Heart right ventricle (tissue), 16 donors: ENCODE measurements at regions of chr7 and their contacts with region 1.

Region 1: GRCh38 chr7:74401137-74401859 is 52.4 kb upstream of the GTF2IRD1 start:
- DNase-seq: peak; percentile 65
- ATAC-seq: peak; percentile 36 to 81 (median 62)
- H3K4me3 ChIP-seq: no peak overlapping the region
- H3K27ac ChIP-seq: no peak overlapping the region
- H3K4me1 ChIP-seq: no peaks in the 10 kb centered on the region
- H3K27me3 ChIP-seq: no peaks in the 10 kb centered on the region
- CTCF ChIP-seq: peak; percentile 92 to 99 (median 96)

Region 2: GRCh38 chr7:73865738-73866445 is 535.4 kb before region 1 on chr7:
- intact Hi-C with region 1: loop called in 4 of 10 experiments (anchors 5 to 10 kb)
- DNase-seq: no peak
- ATAC-seq: peak in 7 of 8 donors; percentile 47 to 84 (median 62)
- H3K4me3 ChIP-seq: no peak overlapping the region
- H3K27ac ChIP-seq: no peak overlapping the region
- H3K4me1 ChIP-seq: peaks cover 0 to 23% (median 9%) of the 10 kb centered on the region in 9 donors
- H3K27me3 ChIP-seq: peaks cover 0 to 4% (median 0%) of the 10 kb centered on the region in 7 donors
- CTCF ChIP-seq: peak; percentile 55 to 79 (median 71)

Region 3: GRCh38 chr7:74068393-74069085 is 332.8 kb before region 1 on chr7:
- intact Hi-C with region 1: loop called in 9 of 10 experiments (anchors 2 to 10 kb)
- DNase-seq: no peak
- ATAC-seq: peak in 1 of 8 donors; percentile 13
- H3K4me3 ChIP-seq: no peak overlapping the region
- H3K27ac ChIP-seq: no peak overlapping the region
- H3K4me1 ChIP-seq: no peaks in the 10 kb centered on the region
- H3K27me3 ChIP-seq: no peaks in the 10 kb centered on the region
- CTCF ChIP-seq: no peak

Region 4: GRCh38 chr7:74115326-74115725 is 286.0 kb before region 1 on chr7:
- intact Hi-C with region 1: no loop called
- DNase-seq: no peak
- ATAC-seq: peak in 1 of 8 donors; percentile 30
- H3K4me3 ChIP-seq: no peak overlapping the region
- H3K27ac ChIP-seq: no peak overlapping the region
- H3K4me1 ChIP-seq: no peaks in the 10 kb centered on the region
- H3K27me3 ChIP-seq: no peaks in the 10 kb centered on the region
- CTCF ChIP-seq: no peak

Region 5: DNA sequence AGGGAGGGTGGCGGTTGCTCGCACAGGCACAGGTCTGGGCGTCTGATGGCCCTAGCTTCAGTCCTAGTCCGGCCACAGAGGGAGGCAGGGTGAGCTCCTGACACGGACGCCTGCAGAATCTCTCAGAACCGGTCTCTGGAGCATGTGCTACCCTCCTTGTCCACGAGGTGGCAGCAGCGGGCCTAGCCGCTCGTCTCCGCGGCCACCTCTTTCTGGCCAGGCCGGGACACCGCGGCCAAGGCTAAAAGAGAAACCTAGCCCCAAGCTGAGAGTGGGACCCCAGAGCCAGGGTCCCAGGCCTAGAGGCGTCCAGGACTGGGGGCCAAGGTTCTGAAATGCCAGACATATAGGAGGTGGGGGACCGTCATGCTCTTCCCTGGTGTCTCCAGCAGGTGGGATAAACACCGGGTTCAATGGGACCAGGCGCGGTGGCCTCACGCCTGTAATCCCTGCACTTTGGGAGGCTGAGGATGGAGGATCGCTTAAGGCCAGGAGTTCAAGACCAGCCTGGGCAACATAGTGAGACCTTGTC is 194.6 kb before region 1 on chr7:
- intact Hi-C with region 1: loop called (anchors 1 to 5 kb)
- DNase-seq: peak; percentile 87 to 91
- ATAC-seq: peak; percentile 80 to 89 (median 85)
- H3K4me3 ChIP-seq: peak overlapping the region in 6 of 10 donors; percentile 22 to 43 (median 30)
- H3K27ac ChIP-seq: no peak overlapping the region
- H3K4me1 ChIP-seq: peaks cover 0 to 33% (median 0%) of the 10 kb centered on the region in 9 donors
- H3K27me3 ChIP-seq: no peaks in the 10 kb centered on the region
- CTCF ChIP-seq: peak; percentile 87 to 99 (median 98)

Region 6: GRCh38 chr7:74289018-74289658 is 112.2 kb before region 1 on chr7 and contains the start of gene CLIP2:
- intact Hi-C with region 1: loop called in 1 of 10 experiments (anchors 10 kb)
- DNase-seq: peak; percentile 79 to 85
- ATAC-seq: peak; percentile 84 to 95 (median 89)
- H3K4me3 ChIP-seq: peak within 1 kb of the TSS; percentile 59 to 91 (median 80)
- H3K27ac ChIP-seq: peak within 1 kb of the TSS in 9 of 10 donors; percentile 68 to 89 (median 80)
- H3K4me1 ChIP-seq: peaks cover 9 to 46% (median 36%) of the 10 kb centered on the region in 9 donors
- H3K27me3 ChIP-seq: no peaks in the 10 kb centered on the region
- CTCF ChIP-seq: no peak
- total RNA-seq, gene CLIP2: 5.1 to 11.3 (median 7.0) TPM

Region 7: GRCh38 chr7:74612015-74612829 is 210.9 kb after region 1 on chr7:
- intact Hi-C with region 1: no loop called
- DNase-seq: peak in 1 of 2 donors; percentile 17
- ATAC-seq: peak in 5 of 8 donors; percentile 30 to 69 (median 39)
- H3K4me3 ChIP-seq: no peak overlapping the region
- H3K27ac ChIP-seq: peak overlapping the region in 1 of 10 donors; percentile 11
- H3K4me1 ChIP-seq: peaks cover 0 to 11% (median under 1%) of the 10 kb centered on the region in 9 donors
- H3K27me3 ChIP-seq: no peaks in the 10 kb centered on the region
- CTCF ChIP-seq: no peak

Region 8: GRCh38 chr7:75711656-75712514 is 1310.6 kb after region 1 on chr7:
- intact Hi-C with region 1: no loop called
- DNase-seq: peak in 1 of 2 donors; percentile 28
- ATAC-seq: peak; percentile 71 to 94 (median 82)
- H3K4me3 ChIP-seq: peak overlapping the region in 6 of 10 donors; percentile 9 to 29 (median 20)
- H3K27ac ChIP-seq: peak overlapping the region; percentile 61 to 90 (median 84)
- H3K4me1 ChIP-seq: peaks cover 12 to 45% (median 33%) of the 10 kb centered on the region in 9 donors
- H3K27me3 ChIP-seq: no peaks in the 10 kb centered on the region
- CTCF ChIP-seq: no peak